A673 (cell line): ENCODE measurements at regions of chr16 and their contacts with region 1.

Region 1: DNA sequence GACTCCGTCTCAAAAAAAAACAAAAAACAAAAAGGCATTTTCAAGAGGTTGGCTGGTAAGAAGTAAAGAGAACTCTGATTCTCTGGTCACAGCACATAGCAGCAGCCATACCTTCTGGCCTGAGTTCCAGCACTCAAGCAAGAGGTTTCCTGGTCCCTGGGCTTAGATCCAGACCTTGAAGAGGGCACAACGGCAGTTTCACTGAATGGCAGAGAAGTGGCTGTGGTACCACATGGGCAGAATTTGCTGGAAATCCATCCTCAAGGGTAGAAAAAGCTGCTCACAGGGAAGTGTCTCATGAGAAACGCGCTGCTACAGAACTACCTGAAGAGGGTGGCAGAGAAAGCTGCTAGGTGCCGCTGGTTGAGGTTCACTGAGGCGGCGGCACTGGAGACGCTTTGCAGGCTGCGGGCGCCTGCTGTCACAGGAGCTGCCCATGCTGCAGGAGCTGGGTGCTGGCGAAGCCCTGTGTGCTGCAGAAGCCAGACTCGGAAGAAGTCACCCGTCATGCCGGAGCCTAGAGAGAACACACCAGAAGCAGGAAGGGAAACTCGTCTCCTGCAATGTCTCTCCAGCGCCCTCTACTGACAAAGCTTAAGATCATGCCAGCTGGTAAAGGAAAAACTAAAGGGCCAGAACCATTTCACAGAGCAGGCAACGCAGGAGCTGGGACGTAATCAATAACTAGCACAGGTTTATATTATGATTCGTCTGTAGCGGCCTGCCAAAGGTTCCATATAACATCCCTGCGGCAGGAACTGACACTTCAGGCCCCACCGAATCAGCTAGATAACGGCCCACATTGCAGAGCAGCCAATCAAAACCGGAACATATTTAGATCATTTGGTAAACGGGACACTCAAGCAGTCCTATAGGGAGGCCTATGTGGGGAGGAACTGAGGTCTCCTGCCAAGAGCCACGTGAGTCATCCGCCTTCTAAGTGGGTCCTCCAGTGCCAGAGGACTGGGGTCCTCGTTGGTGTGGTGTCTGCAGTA is 5.4 kb upstream of the ZNF213 start:
- DNase-seq: peak; percentile 90
- H3K4me3 ChIP-seq: peak overlapping the region; percentile 38
- H3K27ac ChIP-seq: peak overlapping the region; percentile 51
- H3K4me1 ChIP-seq: peaks cover 7% of the 10 kb centered on the region
- H3K27me3 ChIP-seq: no peaks in the 10 kb centered on the region
- CTCF ChIP-seq: peak; percentile 94

Region 2: GRCh38 chr16:3027945-3028712 is 101.3 kb before region 1 on chr16:
- CTCF ChIA-PET with region 1: interaction called, 11 read pairs
- POLR2A ChIA-PET with region 1: no interaction called
- intact Hi-C with region 1: no loop called
- DNase-seq: peak; percentile 90
- H3K4me3 ChIP-seq: no peak overlapping the region
- H3K27ac ChIP-seq: no peak overlapping the region
- H3K4me1 ChIP-seq: peaks cover 17% of the 10 kb centered on the region
- H3K27me3 ChIP-seq: peaks cover 31% of the 10 kb centered on the region
- CTCF ChIP-seq: peak; percentile 93

Region 3: DNA sequence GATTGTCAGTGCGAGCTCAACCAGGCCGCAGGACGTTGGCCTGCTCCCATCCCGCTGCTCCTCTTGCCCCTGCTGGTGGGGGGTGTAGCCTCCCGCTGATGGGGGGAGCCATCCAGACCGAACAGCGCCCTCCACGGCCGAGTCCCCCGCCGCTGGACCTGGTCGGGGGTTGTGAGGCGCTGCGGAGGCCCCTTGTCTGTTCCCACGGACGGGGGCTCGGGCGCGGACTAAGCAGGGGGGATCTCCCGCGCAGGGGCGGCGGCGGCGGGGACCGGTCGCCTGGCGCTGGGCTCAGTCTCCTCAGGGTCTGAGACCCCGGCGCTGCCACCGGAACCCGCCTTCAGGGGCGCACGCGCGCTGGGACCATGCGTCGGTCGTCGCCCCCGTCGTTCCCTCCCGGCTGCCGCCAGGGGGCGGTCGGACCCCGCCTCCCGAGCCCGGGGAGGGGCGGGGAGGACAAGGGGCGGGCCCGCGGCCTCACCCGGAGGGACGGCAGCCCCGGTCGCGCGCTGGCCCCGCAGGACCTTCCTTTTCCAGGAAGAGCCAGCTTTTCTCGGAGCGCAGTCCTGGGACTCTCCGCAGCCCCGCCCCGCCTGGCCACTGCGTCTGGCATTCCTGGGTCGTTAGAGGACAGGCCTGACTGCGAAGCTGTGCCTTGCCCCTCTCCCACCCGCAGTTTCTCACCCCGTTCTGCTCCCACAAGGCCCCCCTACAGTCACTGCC is 70.3 kb before region 1 on chr16:
- CTCF ChIA-PET with region 1: interaction called, 10 read pairs
- POLR2A ChIA-PET with region 1: interaction called, 4 read pairs
- intact Hi-C with region 1: loop called (anchors 5 kb)
- DNase-seq: peak; percentile 87
- H3K4me3 ChIP-seq: peak overlapping the region; percentile 93
- H3K27ac ChIP-seq: peak overlapping the region; percentile 88
- H3K4me1 ChIP-seq: peaks cover 5% of the 10 kb centered on the region
- H3K27me3 ChIP-seq: no peaks in the 10 kb centered on the region
- CTCF ChIP-seq: peak; percentile 69

Region 4: GRCh38 chr16:3106205-3106928 is 23.1 kb before region 1 on chr16:
- CTCF ChIA-PET with region 1: interaction called, 10 read pairs
- POLR2A ChIA-PET with region 1: no interaction called
- intact Hi-C with region 1: no loop called
- DNase-seq: peak; percentile 93
- H3K4me3 ChIP-seq: peak overlapping the region; percentile 74
- H3K27ac ChIP-seq: peak overlapping the region; percentile 77
- H3K4me1 ChIP-seq: peaks cover 8% of the 10 kb centered on the region
- H3K27me3 ChIP-seq: no peaks in the 10 kb centered on the region
- CTCF ChIP-seq: no peak

Region 5: DNA sequence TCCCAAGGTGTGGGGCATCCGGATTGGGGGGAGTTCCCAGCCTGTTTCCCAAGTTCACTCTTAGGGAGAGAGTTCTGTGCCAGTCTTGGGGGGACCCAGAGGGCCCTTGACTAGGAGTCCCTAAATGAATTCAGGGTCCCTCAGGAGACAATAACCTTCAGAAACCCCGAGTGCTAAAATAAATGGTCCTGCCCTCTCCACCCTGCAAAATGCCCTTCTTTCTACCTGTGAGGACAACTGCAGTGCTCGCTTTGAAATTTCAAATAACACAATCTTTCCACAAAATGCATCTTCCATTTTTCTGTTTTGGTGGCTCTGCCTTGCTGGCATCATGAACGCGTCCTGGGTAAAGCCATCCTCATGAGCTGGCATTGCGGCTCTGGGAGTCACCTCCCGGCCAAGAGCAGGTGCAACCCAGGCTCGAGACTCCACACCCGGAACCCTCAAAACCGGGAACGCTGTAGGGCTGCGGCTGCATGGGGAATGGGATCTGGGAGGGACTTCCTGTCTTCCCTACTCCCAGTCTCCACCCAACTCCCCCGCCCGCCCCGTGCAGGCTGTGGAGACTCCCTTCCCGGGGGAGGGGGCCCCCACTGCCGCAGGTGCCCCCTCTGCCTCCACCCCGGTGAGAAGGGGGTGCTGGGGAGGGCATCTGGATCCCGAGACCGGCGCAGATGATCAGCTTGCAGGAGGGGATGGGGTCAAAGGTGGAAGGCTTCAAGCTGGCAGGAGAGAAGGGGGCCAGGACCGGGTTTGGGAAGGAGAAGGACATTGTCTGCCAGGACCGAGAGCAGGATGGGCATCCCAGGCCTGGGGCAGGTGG is 17.2 kb before region 1 on chr16 and contains the start of gene ZNF205:
- CTCF ChIA-PET with region 1: interaction called, 10 read pairs
- POLR2A ChIA-PET with region 1: no interaction called
- intact Hi-C with region 1: no loop called
- DNase-seq: peak; percentile 89
- H3K4me3 ChIP-seq: peak within 1 kb of the TSS; percentile 99
- H3K27ac ChIP-seq: peak within 1 kb of the TSS; percentile 70
- H3K4me1 ChIP-seq: peaks cover 20% of the 10 kb centered on the region
- H3K27me3 ChIP-seq: no peaks in the 10 kb centered on the region
- CTCF ChIP-seq: no peak
- total RNA-seq, gene ZNF205: 16.8 and 19.0 TPM in 2 replicates

Region 6: DNA sequence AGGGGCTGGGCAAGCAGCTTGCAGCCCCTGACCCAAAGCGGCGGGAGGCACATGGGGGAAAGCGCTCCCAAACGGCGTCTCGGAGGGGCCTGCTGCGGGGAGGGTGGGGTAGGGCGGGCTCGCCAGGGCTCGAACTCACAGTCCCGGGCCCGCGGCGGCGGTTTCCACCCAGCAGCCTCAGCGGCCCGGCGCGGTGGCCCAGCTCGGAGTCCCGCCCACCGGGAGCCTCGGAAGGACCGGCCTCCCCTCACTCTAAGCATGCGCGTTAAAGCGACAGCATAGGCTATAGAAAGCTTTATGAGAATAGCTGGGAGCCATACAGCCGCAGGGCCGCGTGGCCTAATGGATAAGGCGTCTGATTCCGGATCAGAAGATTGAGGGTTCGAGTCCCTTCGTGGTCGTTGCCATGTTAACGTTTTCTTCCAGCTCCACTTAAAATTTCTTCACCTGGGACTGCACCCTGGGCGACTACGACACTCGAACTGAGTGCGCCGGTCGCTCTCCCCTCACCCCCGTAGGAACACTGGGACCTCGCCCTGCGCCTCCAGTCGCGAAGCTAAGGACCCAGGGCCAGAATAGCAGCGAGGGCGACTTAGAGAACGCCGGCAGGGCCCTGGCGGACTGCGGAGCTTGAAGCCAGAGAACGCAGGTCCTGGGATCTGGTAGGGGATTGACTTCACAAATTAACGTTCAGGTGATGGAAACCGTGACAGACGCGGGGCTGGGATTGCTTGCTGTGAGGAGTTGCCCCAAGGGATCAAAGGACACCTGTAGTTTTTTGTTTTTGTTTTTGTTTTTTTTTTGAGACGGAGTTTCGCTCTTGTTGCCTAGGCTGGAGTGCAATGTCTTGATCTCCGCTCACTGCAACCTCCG is 21.1 kb after region 1 on chr16:
- CTCF ChIA-PET with region 1: interaction called, 11 read pairs
- POLR2A ChIA-PET with region 1: no interaction called
- intact Hi-C with region 1: no loop called
- DNase-seq: peak; percentile 98
- H3K4me3 ChIP-seq: peak overlapping the region; percentile 63
- H3K27ac ChIP-seq: peak overlapping the region; percentile 70
- H3K4me1 ChIP-seq: no peaks in the 10 kb centered on the region
- H3K27me3 ChIP-seq: no peaks in the 10 kb centered on the region
- CTCF ChIP-seq: no peak

Region 7: GRCh38 chr16:3606441-3606840 is 477.0 kb after region 1 on chr16:
- CTCF ChIA-PET with region 1: no interaction called
- POLR2A ChIA-PET with region 1: no interaction called
- intact Hi-C with region 1: no loop called
- DNase-seq: no peak
- H3K4me3 ChIP-seq: no peak overlapping the region
- H3K27ac ChIP-seq: no peak overlapping the region
- H3K4me1 ChIP-seq: no peaks in the 10 kb centered on the region
- H3K27me3 ChIP-seq: no peaks in the 10 kb centered on the region
- CTCF ChIP-seq: no peak

Region 8: DNA sequence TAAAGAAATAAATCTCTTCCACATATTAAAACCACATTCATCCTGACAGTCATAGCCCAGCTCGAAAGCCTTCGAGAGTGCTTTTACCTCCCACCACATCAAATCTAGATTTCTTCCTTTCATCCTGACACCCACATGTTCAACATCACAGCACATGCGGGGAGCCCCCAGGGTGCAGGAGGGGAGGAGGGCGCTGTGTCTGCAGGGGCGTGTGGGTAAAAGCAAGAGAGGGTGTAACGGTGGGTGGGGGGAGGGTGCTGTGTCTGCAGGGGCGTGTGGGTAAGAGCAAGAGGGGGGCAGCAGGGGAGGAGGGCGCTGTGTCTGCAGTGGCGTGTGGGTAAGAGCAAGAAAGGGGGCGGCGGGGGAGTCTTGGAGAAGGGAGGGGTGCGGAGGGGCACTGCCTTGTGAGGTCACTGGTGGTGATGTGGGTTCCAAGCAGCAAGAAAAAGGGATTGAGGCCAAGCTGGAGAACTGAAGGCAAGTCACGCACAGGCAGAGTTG is 952.1 kb after region 1 on chr16:
- CTCF ChIA-PET with region 1: no interaction called
- POLR2A ChIA-PET with region 1: no interaction called
- intact Hi-C with region 1: no loop called
- DNase-seq: no peak
- H3K4me3 ChIP-seq: peak overlapping the region; percentile 16
- H3K27ac ChIP-seq: peak overlapping the region; percentile 1
- H3K4me1 ChIP-seq: peaks cover 13% of the 10 kb centered on the region
- H3K27me3 ChIP-seq: no peaks in the 10 kb centered on the region
- CTCF ChIP-seq: no peak